ENCODE measurements at regions of chr2 and their contacts with region 1.

Region 1: DNA sequence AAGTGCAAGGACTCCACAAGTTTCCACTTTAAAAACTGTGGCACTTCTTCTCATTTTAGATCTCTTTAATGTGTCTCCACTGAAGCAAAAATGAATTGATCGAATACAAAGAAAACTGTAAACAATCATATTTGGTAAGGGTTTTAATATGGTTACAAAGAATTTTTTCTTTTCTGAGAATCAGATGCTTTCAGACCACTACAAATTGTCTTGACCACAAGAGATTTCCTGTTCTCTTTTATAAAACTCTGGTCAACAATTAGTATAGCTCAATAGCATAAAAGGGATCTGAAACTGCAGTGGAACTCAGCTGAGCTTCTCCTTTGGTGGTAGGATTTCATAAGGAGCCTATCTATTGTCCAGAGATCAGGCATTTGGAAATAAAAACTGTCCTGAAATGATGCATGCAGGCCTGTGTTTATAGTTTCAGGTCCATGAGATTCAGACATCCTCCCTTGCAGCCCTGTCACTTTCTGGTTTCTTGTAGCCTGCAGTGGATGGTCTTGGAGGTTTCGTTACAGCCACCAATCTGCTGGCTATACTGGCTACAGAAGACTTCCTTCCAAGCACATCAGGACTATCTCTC is 120.0 kb downstream of the DOCK10 start:
- DNase-seq: peak in 1 of 9 experiments; percentile 41
- ATAC-seq: no peak
- H3K4me3 ChIP-seq: no peak overlapping the region
- H3K4me3 Mint-ChIP-seq: peak overlapping the region; percentile 4
- H3K27ac ChIP-seq: peak overlapping the region in 1 of 2 experiments; percentile 77
- H3K27ac Mint-ChIP-seq: peak overlapping the region; percentile 85
- H3K4me1 ChIP-seq: peaks cover 57% of the 10 kb centered on the region
- H3K4me1 Mint-ChIP-seq: peaks cover 57% of the 10 kb centered on the region
- H3K27me3 ChIP-seq: no peaks in the 10 kb centered on the region
- H3K27me3 Mint-ChIP-seq: no peaks in the 10 kb centered on the region
- CTCF ChIP-seq: no peak

Region 2: DNA sequence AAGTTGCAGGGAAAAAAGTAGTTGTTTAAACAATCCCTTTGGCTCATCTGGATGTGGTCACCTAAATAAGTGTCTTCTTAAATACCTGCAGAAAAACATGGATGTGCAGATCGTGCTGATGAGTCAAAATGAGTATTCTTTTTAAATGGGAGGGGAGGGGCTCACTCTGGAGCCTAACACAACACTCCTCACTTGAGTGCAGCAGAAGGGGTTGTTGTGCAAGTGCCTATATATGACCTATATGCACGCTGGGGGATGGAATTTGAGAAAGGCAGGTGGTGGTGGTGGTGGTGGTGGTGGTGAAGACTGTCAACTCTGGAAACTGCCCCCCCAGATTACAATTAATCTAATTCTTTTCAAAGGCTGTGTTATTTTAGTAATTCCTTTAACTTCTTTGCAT is 442.4 kb before region 1 on chr2:
- CTCF ChIA-PET with region 1: no interaction called
- POLR2A ChIA-PET with region 1: no interaction called
- intact Hi-C with region 1: no loop called
- DNase-seq: no peak
- ATAC-seq: no peak
- H3K4me3 ChIP-seq: no peak overlapping the region
- H3K4me3 Mint-ChIP-seq: no peak overlapping the region
- H3K27ac ChIP-seq: no peak overlapping the region
- H3K27ac Mint-ChIP-seq: no peak overlapping the region
- H3K4me1 ChIP-seq: peaks cover 5% of the 10 kb centered on the region
- H3K4me1 Mint-ChIP-seq: peaks cover 6% of the 10 kb centered on the region
- H3K27me3 ChIP-seq: no peaks in the 10 kb centered on the region
- H3K27me3 Mint-ChIP-seq: no peaks in the 10 kb centered on the region
- CTCF ChIP-seq: no peak

Region 3: GRCh38 chr2:224885836-224886547 is 36.2 kb before region 1 on chr2:
- CTCF ChIA-PET with region 1: no interaction called
- POLR2A ChIA-PET with region 1: no interaction called
- intact Hi-C with region 1: loop called (anchors 5 kb)
- DNase-seq: peak in 1 of 9 experiments; percentile 18
- ATAC-seq: no peak
- H3K4me3 ChIP-seq: no peak overlapping the region
- H3K4me3 Mint-ChIP-seq: no peak overlapping the region
- H3K27ac ChIP-seq: peak overlapping the region in 1 of 2 experiments; percentile 12
- H3K27ac Mint-ChIP-seq: peak overlapping the region; percentile 84
- H3K4me1 ChIP-seq: peaks cover 11% of the 10 kb centered on the region
- H3K4me1 Mint-ChIP-seq: peaks cover 46% of the 10 kb centered on the region
- H3K27me3 ChIP-seq: no peaks in the 10 kb centered on the region
- H3K27me3 Mint-ChIP-seq: no peaks in the 10 kb centered on the region
- CTCF ChIP-seq: no peak

Region 4: DNA sequence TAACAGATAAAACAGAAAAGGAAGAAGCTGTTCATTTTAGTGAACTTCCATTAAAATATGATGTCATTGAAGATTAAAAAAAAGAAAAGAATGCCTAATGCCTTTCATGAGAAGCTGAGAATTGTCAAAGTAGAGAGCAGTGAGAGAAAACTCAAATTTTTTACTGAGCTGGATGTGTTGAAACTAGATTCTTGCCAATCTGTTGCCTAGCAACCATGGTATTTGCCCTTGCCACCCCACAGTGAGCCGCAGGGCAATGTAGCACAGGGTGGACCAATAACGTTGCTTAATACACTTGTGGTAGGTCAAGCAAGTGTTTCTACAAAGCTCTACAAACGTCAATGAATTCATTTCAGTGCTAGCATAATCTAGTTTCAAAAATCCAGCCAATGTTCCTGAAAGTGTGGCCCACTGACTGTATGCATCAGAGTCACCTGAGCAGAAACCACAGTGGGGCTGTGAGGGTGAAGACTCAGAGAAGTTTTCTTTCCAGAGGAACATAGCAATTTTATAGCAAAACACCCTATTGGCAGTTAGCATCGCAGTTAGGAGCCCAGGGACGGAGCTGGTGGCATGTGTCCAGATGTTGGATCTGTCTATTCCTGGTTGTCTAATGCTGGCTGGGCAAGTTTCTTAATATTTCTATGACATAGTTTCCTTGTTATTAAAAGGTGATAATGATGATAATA is 12.2 kb before region 1 on chr2:
- CTCF ChIA-PET with region 1: interaction called, 3 read pairs
- POLR2A ChIA-PET with region 1: interaction called, 5 read pairs
- intact Hi-C with region 1: loop called in 1 of 2 experiments (anchors 1 kb)
- DNase-seq: peak in 4 of 9 experiments; percentile 50 to 75 (median 56)
- ATAC-seq: peak; percentile 78
- H3K4me3 ChIP-seq: no peak overlapping the region
- H3K4me3 Mint-ChIP-seq: peak overlapping the region; percentile 23
- H3K27ac ChIP-seq: peak overlapping the region in 1 of 2 experiments; percentile 29
- H3K27ac Mint-ChIP-seq: peak overlapping the region; percentile 90
- H3K4me1 ChIP-seq: peaks cover 22% of the 10 kb centered on the region
- H3K4me1 Mint-ChIP-seq: peaks cover 57% of the 10 kb centered on the region
- H3K27me3 ChIP-seq: no peaks in the 10 kb centered on the region
- H3K27me3 Mint-ChIP-seq: no peaks in the 10 kb centered on the region
- CTCF ChIP-seq: no peak

Region 5: GRCh38 chr2:226835796-226836547 is 1913.7 kb after region 1 on chr2 and contains the start of gene RHBDD1:
- CTCF ChIA-PET with region 1: no interaction called
- POLR2A ChIA-PET with region 1: no interaction called
- intact Hi-C with region 1: loop called in 1 of 2 experiments (anchors 10 kb)
- DNase-seq: peak; percentile 88 to 98 (median 94)
- ATAC-seq: peak; percentile 82
- H3K4me3 ChIP-seq: peak within 1 kb of the TSS; percentile 64 to 74
- H3K4me3 Mint-ChIP-seq: peak within 1 kb of the TSS; percentile 90
- H3K27ac ChIP-seq: peak within 1 kb of the TSS; percentile 94 to 97
- H3K27ac Mint-ChIP-seq: peak within 1 kb of the TSS; percentile 98
- H3K4me1 ChIP-seq: peaks cover 51% of the 10 kb centered on the region
- H3K4me1 Mint-ChIP-seq: peaks cover 61% of the 10 kb centered on the region
- H3K27me3 ChIP-seq: no peaks in the 10 kb centered on the region
- H3K27me3 Mint-ChIP-seq: no peaks in the 10 kb centered on the region
- CTCF ChIP-seq: no peak
- total RNA-seq, gene RHBDD1: 29.7 to 30.9 TPM